ENCODE measurements at regions of chr10 and their contacts with region 1.

Region 1: GRCh38 chr10:22550732-22551131 is 163.6 kb downstream of the PIP4K2A start:
- DNase-seq: peak; percentile 54 to 66 (median 59)
- H3K4me3 ChIP-seq: no peak overlapping the region
- H3K4me3 Mint-ChIP-seq: no peak overlapping the region
- H3K27ac ChIP-seq: no peak overlapping the region
- H3K27ac Mint-ChIP-seq: peak overlapping the region in 4 of 7 donors; percentile 2 to 86 (median 42)
- H3K4me1 ChIP-seq: no peaks in the 10 kb centered on the region
- H3K4me1 Mint-ChIP-seq: peaks cover 12 to 15% (median 13%) of the 10 kb centered on the region in 4 donors
- H3K27me3 ChIP-seq: no peaks in the 10 kb centered on the region
- H3K27me3 Mint-ChIP-seq: no peaks in the 10 kb centered on the region

Region 2: GRCh38 chr10:22597138-22597537 is 46.4 kb after region 1 on chr10:
- CTCF ChIA-PET with region 1: interaction called, 3 read pairs
- POLR2A ChIA-PET with region 1: no interaction called
- intact Hi-C with region 1: loop called (anchors 5 kb)
- DNase-seq: peak in 4 of 5 donors; percentile 28 to 46 (median 36)
- H3K4me3 ChIP-seq: no peak overlapping the region
- H3K4me3 Mint-ChIP-seq: peak overlapping the region in 7 of 8 donors; percentile 45 to 85 (median 55)
- H3K27ac ChIP-seq: no peak overlapping the region
- H3K27ac Mint-ChIP-seq: peak overlapping the region; percentile 65 to 93 (median 87)
- H3K4me1 ChIP-seq: peaks cover 81% of the 10 kb centered on the region
- H3K4me1 Mint-ChIP-seq: peaks cover 66 to 95% (median 80%) of the 10 kb centered on the region in 4 donors
- H3K27me3 ChIP-seq: no peaks in the 10 kb centered on the region
- H3K27me3 Mint-ChIP-seq: no peaks in the 10 kb centered on the region

Region 3: GRCh38 chr10:22846294-22846693 is 295.6 kb after region 1 on chr10:
- CTCF ChIA-PET with region 1: interaction called, 4 read pairs
- POLR2A ChIA-PET with region 1: no interaction called
- intact Hi-C with region 1: loop called (anchors 1 kb)
- DNase-seq: no peak
- H3K4me3 ChIP-seq: no peak overlapping the region
- H3K4me3 Mint-ChIP-seq: no peak overlapping the region
- H3K27ac ChIP-seq: no peak overlapping the region
- H3K27ac Mint-ChIP-seq: no peak overlapping the region
- H3K4me1 ChIP-seq: no peaks in the 10 kb centered on the region
- H3K4me1 Mint-ChIP-seq: peaks cover 5 to 9% (median 9%) of the 10 kb centered on the region in 4 donors
- H3K27me3 ChIP-seq: no peaks in the 10 kb centered on the region
- H3K27me3 Mint-ChIP-seq: peaks cover 2 to 3% of the 10 kb centered on the region in 2 donors

Measured in CD4-positive, alpha-beta memory T cell (primary cell).